Dendritic cell treated with granulocyte-macrophage colony-stimulating factor and Interleukin-4, amounts not matched to agents 40 ng/mL and 50 ng/mL, for 4 days (primary cell): ENCODE measurements at regions of chr1 and their contacts with region 1.

Region 1: GRCh38 chr1:186605762-186606350 is 74.4 kb downstream of the PTGS2 start:
- H3K4me3 Mint-ChIP-seq: no peak overlapping the region
- H3K27ac Mint-ChIP-seq: no peak overlapping the region
- H3K4me1 Mint-ChIP-seq: peaks cover 9% of the 10 kb centered on the region
- H3K27me3 Mint-ChIP-seq: no peaks in the 10 kb centered on the region

Region 2: DNA sequence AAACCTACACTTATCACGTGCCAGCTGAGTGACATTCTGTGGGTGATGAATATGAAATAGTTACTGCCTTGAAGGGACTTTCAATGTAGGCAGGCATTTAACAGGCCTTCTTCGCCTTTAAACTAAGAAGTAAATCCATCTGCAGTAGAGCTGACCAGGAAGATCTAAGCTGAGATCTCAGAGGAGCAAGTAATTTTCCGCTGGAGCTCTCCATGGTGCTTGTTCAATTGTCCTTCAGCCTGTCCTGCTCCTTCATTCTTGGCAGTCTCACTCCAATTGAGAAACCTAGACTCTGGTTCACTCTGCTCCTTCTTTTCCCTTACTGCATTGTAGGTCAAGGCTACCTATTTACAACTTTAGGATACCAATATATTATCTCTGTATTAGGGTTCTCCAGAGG is 688.2 kb before region 1 on chr1:
- intact Hi-C with region 1: no loop called
- H3K4me3 Mint-ChIP-seq: no peak overlapping the region
- H3K27ac Mint-ChIP-seq: no peak overlapping the region
- H3K4me1 Mint-ChIP-seq: no peaks in the 10 kb centered on the region
- H3K27me3 Mint-ChIP-seq: no peaks in the 10 kb centered on the region

Region 3: GRCh38 chr1:186404454-186405051 is 201.3 kb before region 1 on chr1:
- intact Hi-C with region 1: loop called (anchors 10 kb)
- H3K4me3 Mint-ChIP-seq: no peak overlapping the region
- H3K27ac Mint-ChIP-seq: no peak overlapping the region
- H3K4me1 Mint-ChIP-seq: no peaks in the 10 kb centered on the region
- H3K27me3 Mint-ChIP-seq: no peaks in the 10 kb centered on the region

Region 4: DNA sequence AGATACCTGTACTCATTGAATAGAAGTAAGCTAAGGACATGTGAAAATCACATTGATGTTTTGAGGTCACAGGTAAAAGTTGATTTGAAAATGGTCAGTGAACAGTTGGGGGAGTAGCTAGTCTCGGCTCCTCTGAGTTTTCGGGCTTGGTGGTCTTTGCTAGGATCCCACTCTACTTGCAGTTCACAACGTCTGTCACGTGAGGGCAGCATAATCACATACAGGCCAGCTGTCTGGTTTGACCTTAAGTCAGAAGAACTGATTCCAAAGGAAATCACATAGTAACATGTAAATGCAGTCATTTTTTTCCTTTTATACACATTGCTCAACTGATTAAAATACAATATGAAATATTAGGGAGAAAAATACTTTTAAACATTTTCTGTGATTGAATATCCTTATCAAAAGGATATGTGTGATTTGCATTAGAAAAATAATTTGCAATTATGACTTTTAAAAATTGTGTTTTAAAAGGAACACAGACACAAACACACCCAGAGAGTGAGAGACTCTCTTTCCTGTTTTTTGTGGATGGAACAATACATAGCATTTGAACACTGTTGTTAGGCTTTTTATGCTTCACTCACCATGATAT is 123.1 kb before region 1 on chr1:
- intact Hi-C with region 1: loop called (anchors 2 kb)
- H3K4me3 Mint-ChIP-seq: no peak overlapping the region
- H3K27ac Mint-ChIP-seq: no peak overlapping the region
- H3K4me1 Mint-ChIP-seq: no peaks in the 10 kb centered on the region
- H3K27me3 Mint-ChIP-seq: no peaks in the 10 kb centered on the region

Region 5: DNA sequence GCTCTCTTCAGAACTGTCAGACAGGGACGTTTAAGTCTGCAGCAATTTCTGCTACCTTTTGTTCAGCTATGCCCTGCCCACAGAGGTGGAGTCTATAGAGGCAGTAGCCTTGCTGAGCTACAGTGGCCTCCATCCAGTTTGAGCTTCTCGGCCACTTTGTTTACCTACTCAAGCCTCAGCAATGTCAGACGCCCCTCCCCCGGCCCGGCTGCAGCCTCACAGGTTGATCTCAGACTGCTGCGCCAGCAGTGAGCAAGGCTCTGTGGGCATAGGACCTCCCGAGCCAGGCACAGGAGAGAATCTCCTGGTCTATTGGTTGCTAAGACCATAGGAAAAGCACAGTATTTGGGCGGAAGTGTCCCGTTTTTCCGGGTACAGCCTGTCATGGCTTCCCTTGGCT is 55.0 kb before region 1 on chr1:
- intact Hi-C with region 1: no loop called
- H3K4me3 Mint-ChIP-seq: no peak overlapping the region
- H3K27ac Mint-ChIP-seq: no peak overlapping the region
- H3K4me1 Mint-ChIP-seq: no peaks in the 10 kb centered on the region
- H3K27me3 Mint-ChIP-seq: no peaks in the 10 kb centered on the region